ENCODE measurements at regions of chr14 and their contacts with region 1.

Region 1: GRCh38 chr14:101876555-101876938 is 87.8 kb upstream of the DYNC1H1 start:
- DNase-seq: peak; percentile 71 to 94 (median 82)
- H3K4me3 ChIP-seq: peak overlapping the region in 1 of 2 donors; percentile 8
- H3K4me3 Mint-ChIP-seq: peak overlapping the region; percentile 59 to 86 (median 76)
- H3K27ac ChIP-seq: peak overlapping the region; percentile 65
- H3K27ac Mint-ChIP-seq: peak overlapping the region; percentile 73 to 97 (median 91)
- H3K4me1 ChIP-seq: peaks cover 88% of the 10 kb centered on the region
- H3K4me1 Mint-ChIP-seq: peaks cover 55 to 88% (median 74%) of the 10 kb centered on the region in 4 donors
- H3K27me3 ChIP-seq: no peaks in the 10 kb centered on the region
- H3K27me3 Mint-ChIP-seq: no peaks in the 10 kb centered on the region

Region 2: GRCh38 chr14:101469402-101470247 is 406.9 kb before region 1 on chr14:
- CTCF ChIA-PET with region 1: no interaction called
- POLR2A ChIA-PET with region 1: no interaction called
- intact Hi-C with region 1: no loop called
- DNase-seq: no peak
- H3K4me3 ChIP-seq: no peak overlapping the region
- H3K4me3 Mint-ChIP-seq: no peak overlapping the region
- H3K27ac ChIP-seq: no peak overlapping the region
- H3K27ac Mint-ChIP-seq: no peak overlapping the region
- H3K4me1 ChIP-seq: no peaks in the 10 kb centered on the region
- H3K4me1 Mint-ChIP-seq: peaks cover 0 to 2% (median 0%) of the 10 kb centered on the region in 4 donors
- H3K27me3 ChIP-seq: no peaks in the 10 kb centered on the region
- H3K27me3 Mint-ChIP-seq: peaks cover 9 to 18% of the 10 kb centered on the region in 2 donors

Region 3: DNA sequence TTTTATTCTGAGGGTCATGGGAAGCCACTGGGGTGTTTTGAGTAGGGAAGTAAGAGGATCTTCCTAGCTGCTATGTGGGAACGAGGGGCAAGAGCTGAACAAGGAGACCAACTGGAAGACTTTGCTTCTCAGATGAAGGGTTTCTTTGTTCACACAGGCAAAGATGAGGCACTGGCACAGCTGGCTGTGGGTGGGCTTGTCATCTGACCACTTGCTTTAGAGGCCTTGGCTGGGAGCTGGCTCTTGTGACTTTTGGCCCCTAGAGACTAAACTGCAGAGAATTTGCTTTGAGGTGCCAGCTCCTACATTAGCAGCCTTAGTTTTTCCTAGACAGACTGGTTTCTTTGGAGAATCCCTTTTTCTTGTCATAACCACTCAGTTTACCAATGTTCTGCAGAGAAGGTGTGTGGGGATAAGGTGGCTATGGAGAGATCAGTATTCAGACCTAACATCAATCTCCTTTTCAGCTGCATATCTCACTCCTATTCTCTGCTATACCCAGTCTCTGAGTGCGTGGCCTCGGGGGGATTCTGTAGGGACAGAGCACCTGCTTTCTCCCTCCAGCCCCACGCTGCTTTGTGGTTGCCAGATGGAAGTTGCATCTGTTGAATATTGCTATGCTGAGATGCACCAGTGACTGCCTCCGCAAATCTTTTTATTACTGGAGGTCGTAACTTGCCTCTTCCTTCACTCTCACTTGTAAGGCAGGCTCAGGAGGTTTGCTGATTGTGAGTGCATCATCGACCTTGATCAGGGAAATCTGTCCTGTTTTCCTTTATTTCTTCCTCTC is 102.3 kb before region 1 on chr14:
- CTCF ChIA-PET with region 1: interaction called, 17 read pairs
- POLR2A ChIA-PET with region 1: interaction called, 3 read pairs
- intact Hi-C with region 1: loop called (anchors 5 kb)
- DNase-seq: no peak
- H3K4me3 ChIP-seq: no peak overlapping the region
- H3K4me3 Mint-ChIP-seq: no peak overlapping the region
- H3K27ac ChIP-seq: no peak overlapping the region
- H3K27ac Mint-ChIP-seq: peak overlapping the region in 3 of 7 donors; percentile 5 to 69 (median 42)
- H3K4me1 ChIP-seq: peaks cover 13% of the 10 kb centered on the region
- H3K4me1 Mint-ChIP-seq: peaks cover 14 to 42% (median 27%) of the 10 kb centered on the region in 4 donors
- H3K27me3 ChIP-seq: no peaks in the 10 kb centered on the region
- H3K27me3 Mint-ChIP-seq: no peaks in the 10 kb centered on the region

Region 4: GRCh38 chr14:101905614-101906013 is 29.1 kb after region 1 on chr14:
- CTCF ChIA-PET with region 1: no interaction called
- POLR2A ChIA-PET with region 1: no interaction called
- intact Hi-C with region 1: no loop called
- DNase-seq: no peak
- H3K4me3 ChIP-seq: no peak overlapping the region
- H3K4me3 Mint-ChIP-seq: no peak overlapping the region
- H3K27ac ChIP-seq: no peak overlapping the region
- H3K27ac Mint-ChIP-seq: peak overlapping the region in 4 of 7 donors; percentile 41 to 79 (median 68)
- H3K4me1 ChIP-seq: no peaks in the 10 kb centered on the region
- H3K4me1 Mint-ChIP-seq: peaks cover 0 to 3% (median 0%) of the 10 kb centered on the region in 4 donors
- H3K27me3 ChIP-seq: no peaks in the 10 kb centered on the region
- H3K27me3 Mint-ChIP-seq: no peaks in the 10 kb centered on the region

Measured in CD4-positive, alpha-beta memory T cell (primary cell).